ENCODE measurements at regions of chr6 and their contacts with region 1.

Region 1: DNA sequence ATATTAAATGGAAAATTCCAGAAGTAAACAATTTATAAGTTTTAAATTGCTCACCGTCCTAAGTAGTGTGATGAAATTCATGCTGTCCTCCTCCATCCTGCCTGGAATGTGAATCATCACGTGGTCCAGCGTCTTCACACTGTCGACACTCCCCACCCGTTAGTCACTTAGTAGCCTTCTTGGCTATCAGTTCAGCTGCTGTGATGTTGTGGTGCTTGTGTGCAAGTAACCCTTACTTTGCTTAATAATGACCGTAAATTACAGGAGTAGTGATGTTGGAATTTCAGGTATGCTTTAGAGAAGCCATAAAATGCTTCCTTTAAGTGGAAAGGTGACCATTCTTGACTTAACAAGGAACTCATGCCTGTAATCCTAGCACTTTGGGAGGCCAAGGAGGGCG is 25.2 kb downstream of the RIOK1 start:
- DNase-seq: no peak
- H3K4me3 ChIP-seq: no peak overlapping the region
- CTCF ChIP-seq: no peak
- POLR2A ChIP-seq: no peak

Region 2: DNA sequence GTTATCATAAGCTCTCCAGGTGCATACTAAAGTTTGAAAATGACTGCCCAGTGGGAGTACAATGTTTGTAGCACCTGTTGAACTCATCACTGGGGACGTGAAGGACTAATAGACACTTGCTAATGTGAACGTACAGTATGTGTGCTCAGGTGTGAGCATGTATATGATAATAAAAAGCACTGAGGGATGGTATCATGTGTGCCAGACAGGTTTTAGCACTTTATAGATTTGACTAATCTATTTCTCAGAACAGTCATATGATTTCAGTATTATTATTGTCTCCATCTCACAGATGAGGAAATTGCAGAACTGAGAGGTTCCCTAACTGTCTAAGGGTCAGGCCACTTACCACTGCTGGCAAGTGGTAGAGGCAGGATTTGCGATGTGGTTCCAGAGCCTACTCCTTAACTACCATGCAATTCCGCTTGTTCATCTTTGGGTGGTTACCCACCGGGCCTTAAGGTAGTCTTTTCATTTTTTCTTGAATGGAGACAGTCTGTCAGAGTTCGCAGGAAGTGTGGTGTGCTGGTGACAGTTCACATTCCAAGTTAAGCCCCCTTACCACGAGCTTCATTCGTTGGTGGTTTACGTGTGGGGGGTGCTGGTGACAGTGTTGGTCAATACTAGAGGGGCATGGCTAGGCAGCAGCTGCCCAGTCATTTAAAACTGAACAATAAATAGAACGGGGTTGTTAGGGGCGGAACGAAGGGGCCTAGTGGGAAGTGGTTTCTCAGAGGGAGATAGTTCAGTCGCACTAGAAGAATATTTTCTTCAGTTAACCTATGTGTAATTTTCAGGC is 260.3 kb before region 1 on chr6:
- intact Hi-C with region 1: no loop called
- DNase-seq: peak in 1 of 2 donors; percentile 12
- H3K4me3 ChIP-seq: no peak overlapping the region
- CTCF ChIP-seq: no peak
- POLR2A ChIP-seq: no peak

Region 3: DNA sequence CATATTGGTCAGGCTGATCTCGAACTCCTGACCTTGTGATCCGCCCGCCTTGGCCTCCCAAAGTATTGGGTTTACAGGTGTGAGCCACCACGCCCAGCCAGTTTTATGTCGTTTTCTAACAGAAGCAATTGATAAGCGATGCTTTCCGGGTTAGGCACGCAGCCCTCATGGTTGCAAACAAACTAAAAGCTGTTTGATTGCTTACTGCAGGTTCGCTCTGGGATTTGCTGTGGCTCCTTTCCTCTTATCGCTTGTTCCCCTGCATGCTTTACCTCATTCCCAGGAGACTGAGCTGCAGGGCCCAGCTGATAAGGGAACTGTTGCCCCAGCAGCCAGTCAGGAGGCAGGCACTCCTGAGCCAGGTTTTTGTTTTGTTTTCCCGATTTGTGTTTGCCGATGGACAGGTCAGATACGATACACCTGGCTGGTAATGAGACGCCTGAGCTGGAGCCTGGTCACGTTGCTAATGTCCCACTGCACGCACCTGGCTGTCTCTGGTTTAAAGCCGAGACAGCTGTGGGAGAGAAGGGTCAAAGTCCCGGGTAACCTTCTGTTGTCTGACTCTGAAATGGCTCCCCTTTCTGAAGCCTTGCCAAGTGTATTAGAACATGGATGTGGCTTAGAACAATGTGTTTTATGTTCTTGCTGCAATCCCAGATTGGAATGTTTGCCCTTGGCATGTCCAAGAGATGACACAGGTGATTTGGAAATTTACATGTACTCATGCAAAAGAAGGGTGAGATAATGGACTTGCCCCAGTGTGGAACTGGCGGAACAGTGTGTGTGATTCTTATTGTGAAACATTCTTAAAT is 146.5 kb after region 1 on chr6:
- intact Hi-C with region 1: loop called (anchors 10 kb)
- DNase-seq: no peak
- H3K4me3 ChIP-seq: no peak overlapping the region
- CTCF ChIP-seq: no peak
- POLR2A ChIP-seq: no peak